Endothelial cell of umbilical vein (primary cell): ENCODE measurements at regions of chr1 and their contacts with region 1.

Region 1: GRCh38 chr1:65687428-65688214 is 105.1 kb upstream of the PDE4B start:
- DNase-seq: peak; percentile 87
- H3K4me3 ChIP-seq: no peak overlapping the region
- H3K27ac ChIP-seq: no peak overlapping the region
- H3K4me1 ChIP-seq: peaks cover 15% of the 10 kb centered on the region
- H3K27me3 ChIP-seq: no peaks in the 10 kb centered on the region
- CTCF ChIP-seq: peak; percentile 72 to 86
- POLR2A ChIP-seq: no peak

Region 2: GRCh38 chr1:65067491-65068201 is 620.0 kb before region 1 on chr1:
- CTCF ChIA-PET with region 1: interaction called, 25 read pairs
- POLR2A ChIA-PET with region 1: no interaction called
- dilution Hi-C with region 1: no loop called
- intact Hi-C with region 1: no loop called
- DNase-seq: peak; percentile 84
- H3K4me3 ChIP-seq: peak overlapping the region; percentile 48 to 88 (median 85)
- H3K27ac ChIP-seq: peak overlapping the region; percentile 82
- H3K4me1 ChIP-seq: peaks cover 14% of the 10 kb centered on the region
- H3K27me3 ChIP-seq: no peaks in the 10 kb centered on the region
- CTCF ChIP-seq: no peak
- POLR2A ChIP-seq: no peak

Region 3: GRCh38 chr1:65209005-65209885 is 478.4 kb before region 1 on chr1:
- CTCF ChIA-PET with region 1: interaction called, 169 read pairs
- POLR2A ChIA-PET with region 1: no interaction called
- dilution Hi-C with region 1: no loop called
- intact Hi-C with region 1: no loop called
- DNase-seq: peak; percentile 67
- H3K4me3 ChIP-seq: no peak overlapping the region
- H3K27ac ChIP-seq: no peak overlapping the region
- H3K4me1 ChIP-seq: no peaks in the 10 kb centered on the region
- H3K27me3 ChIP-seq: peaks cover 0 to 2% of the 10 kb centered on the region in 2 experiments
- CTCF ChIP-seq: peak; percentile 39 to 42
- POLR2A ChIP-seq: no peak

Region 4: GRCh38 chr1:65243491-65243890 is 444.1 kb before region 1 on chr1:
- CTCF ChIA-PET with region 1: interaction called, 292 read pairs
- POLR2A ChIA-PET with region 1: no interaction called
- dilution Hi-C with region 1: no loop called
- intact Hi-C with region 1: no loop called
- DNase-seq: no peak
- H3K4me3 ChIP-seq: no peak overlapping the region
- H3K27ac ChIP-seq: no peak overlapping the region
- H3K4me1 ChIP-seq: no peaks in the 10 kb centered on the region
- H3K27me3 ChIP-seq: peaks cover 0 to 4% of the 10 kb centered on the region in 2 experiments
- CTCF ChIP-seq: no peak
- POLR2A ChIP-seq: no peak

Region 5: GRCh38 chr1:65419681-65420589 is 267.7 kb before region 1 on chr1:
- CTCF ChIA-PET with region 1: interaction called, 19 read pairs
- POLR2A ChIA-PET with region 1: no interaction called
- dilution Hi-C with region 1: no loop called
- intact Hi-C with region 1: loop called (anchors 1 kb)
- DNase-seq: peak; percentile 99
- H3K4me3 ChIP-seq: peak overlapping the region; percentile 64 to 76 (median 71)
- H3K27ac ChIP-seq: peak overlapping the region; percentile 62
- H3K4me1 ChIP-seq: peaks cover 37% of the 10 kb centered on the region
- H3K27me3 ChIP-seq: no peaks in the 10 kb centered on the region
- CTCF ChIP-seq: no peak
- POLR2A ChIP-seq: peak; percentile 5

Region 6: DNA sequence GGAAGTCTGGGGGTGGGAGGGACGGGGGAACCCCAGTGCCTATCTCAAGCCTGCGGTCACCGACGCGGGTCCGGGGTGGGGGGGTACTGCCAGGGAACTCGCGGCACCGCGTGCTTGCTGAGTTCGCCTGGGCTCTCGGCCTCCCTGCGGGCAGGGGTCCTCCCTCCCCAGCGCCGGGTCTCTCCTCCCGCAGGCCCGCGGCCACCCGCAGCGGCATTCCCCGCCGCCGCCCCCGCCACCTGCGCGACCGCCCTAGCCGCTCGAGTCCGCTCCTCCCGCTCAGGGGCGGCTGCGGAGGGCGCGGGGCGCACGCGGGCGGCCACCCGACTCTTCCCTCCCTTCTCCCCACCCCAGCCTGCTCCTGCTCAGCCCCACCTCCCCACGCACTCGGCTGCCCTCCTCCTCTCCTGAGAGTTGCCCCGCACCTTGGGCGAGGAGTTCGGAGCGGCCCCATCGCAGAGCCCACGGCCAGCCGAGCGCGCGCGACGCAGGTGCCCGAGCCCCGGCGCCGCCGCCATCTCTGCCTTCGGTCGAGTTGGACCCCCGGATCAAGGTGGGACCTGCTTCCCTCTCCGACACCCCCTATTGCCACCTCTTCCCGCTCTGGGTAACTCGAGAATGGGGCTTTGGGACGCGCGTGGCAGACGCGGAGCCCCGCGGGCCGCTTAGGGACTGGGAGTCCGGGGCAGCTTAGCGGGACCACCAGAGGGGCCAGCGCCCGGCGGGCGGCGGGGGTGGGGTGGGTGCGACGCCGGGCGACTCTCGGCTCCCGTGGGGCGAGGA is 162.2 kb before region 1 on chr1:
- CTCF ChIA-PET with region 1: interaction called, 4 read pairs
- POLR2A ChIA-PET with region 1: no interaction called
- dilution Hi-C with region 1: no loop called
- intact Hi-C with region 1: loop called (anchors 2 kb)
- DNase-seq: no peak
- H3K4me3 ChIP-seq: peak overlapping the region; percentile 34 to 84 (median 38)
- H3K27ac ChIP-seq: no peak overlapping the region
- H3K4me1 ChIP-seq: peaks cover 27% of the 10 kb centered on the region
- H3K27me3 ChIP-seq: no peaks in the 10 kb centered on the region
- CTCF ChIP-seq: no peak
- POLR2A ChIP-seq: no peak

Region 7: DNA sequence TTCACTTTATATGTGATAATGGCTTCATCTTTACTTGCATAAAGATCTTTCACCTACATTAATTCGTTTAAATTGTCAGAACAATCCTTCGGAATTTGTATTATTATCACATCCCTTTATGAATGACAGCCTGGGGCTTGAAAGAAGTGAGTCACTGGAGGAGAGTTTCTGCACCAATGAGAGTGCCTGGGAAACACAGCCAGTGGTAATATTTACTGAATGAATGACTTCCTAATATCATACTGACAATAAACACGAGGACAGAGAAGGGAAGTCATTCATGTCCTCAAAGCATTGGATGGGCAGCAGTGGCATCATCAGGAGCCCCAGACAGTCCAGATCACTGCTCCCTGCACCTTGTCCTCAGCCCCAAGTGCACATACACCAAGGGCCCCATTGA is 64.3 kb after region 1 on chr1:
- CTCF ChIA-PET with region 1: no interaction called
- POLR2A ChIA-PET with region 1: no interaction called
- dilution Hi-C with region 1: no loop called
- intact Hi-C with region 1: no loop called
- DNase-seq: no peak
- H3K4me3 ChIP-seq: no peak overlapping the region
- H3K27ac ChIP-seq: no peak overlapping the region
- H3K4me1 ChIP-seq: no peaks in the 10 kb centered on the region
- H3K27me3 ChIP-seq: peaks cover 0 to 2% of the 10 kb centered on the region in 2 experiments
- CTCF ChIP-seq: no peak
- POLR2A ChIP-seq: no peak

Region 8: DNA sequence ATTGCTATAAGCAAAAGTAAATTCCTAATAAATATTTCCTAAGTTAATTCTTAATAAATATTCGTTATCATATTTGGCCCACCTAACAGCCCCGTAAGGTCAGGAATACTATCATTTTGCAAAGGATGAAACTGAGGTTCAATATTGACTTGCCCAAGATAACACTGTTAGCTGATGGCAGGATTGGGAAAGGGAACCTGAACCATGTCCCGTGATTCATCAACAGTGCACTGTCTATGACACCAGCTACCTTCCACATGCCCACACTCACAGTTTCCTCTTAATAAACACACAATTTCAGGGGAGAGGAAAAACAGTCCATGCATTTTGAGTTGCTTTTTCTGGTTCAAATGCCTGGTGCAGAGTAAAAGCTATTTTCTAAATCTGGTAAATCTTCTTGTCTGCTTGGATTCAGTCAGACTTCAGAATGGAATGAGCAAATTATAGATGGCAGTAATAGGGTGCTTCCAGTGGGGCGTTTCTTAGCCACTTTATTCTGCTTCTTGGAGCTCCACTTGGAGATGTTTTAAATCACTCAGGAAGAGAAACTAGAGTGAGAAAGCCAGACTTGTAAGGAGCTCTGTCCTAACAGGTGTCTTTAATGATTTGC is 459.7 kb after region 1 on chr1:
- CTCF ChIA-PET with region 1: no interaction called
- POLR2A ChIA-PET with region 1: no interaction called
- dilution Hi-C with region 1: no loop called
- intact Hi-C with region 1: no loop called
- DNase-seq: no peak
- H3K4me3 ChIP-seq: no peak overlapping the region
- H3K27ac ChIP-seq: no peak overlapping the region
- H3K4me1 ChIP-seq: no peaks in the 10 kb centered on the region
- H3K27me3 ChIP-seq: peaks cover 0 to 2% of the 10 kb centered on the region in 2 experiments
- CTCF ChIP-seq: no peak
- POLR2A ChIP-seq: no peak

Region 9: GRCh38 chr1:66242646-66243547 is 555.3 kb after region 1 on chr1:
- CTCF ChIA-PET with region 1: interaction called, 10 read pairs
- POLR2A ChIA-PET with region 1: no interaction called
- dilution Hi-C with region 1: no loop called
- intact Hi-C with region 1: loop called (anchors 5 kb)
- DNase-seq: peak; percentile 85
- H3K4me3 ChIP-seq: no peak overlapping the region
- H3K27ac ChIP-seq: peak overlapping the region; percentile 64
- H3K4me1 ChIP-seq: peaks cover 26% of the 10 kb centered on the region
- H3K27me3 ChIP-seq: no peaks in the 10 kb centered on the region
- CTCF ChIP-seq: peak; percentile 98 to 100
- POLR2A ChIP-seq: no peak